ENCODE measurements at regions of chr5 and their contacts with region 1.

Region 1: GRCh38 chr5:31833005-31833404 is 194.1 kb downstream of the PDZD2 start:
- DNase-seq: no peak
- H3K4me3 ChIP-seq: no peak overlapping the region
- H3K4me3 Mint-ChIP-seq: no peak overlapping the region
- H3K27ac ChIP-seq: no peak overlapping the region
- H3K27ac Mint-ChIP-seq: no peak overlapping the region
- H3K4me1 ChIP-seq: no peaks in the 10 kb centered on the region
- H3K4me1 Mint-ChIP-seq: no peaks in the 10 kb centered on the region
- H3K27me3 ChIP-seq: no peaks in the 10 kb centered on the region
- H3K27me3 Mint-ChIP-seq: peaks cover 0 to 6% of the 10 kb centered on the region in 2 donors

Region 2: DNA sequence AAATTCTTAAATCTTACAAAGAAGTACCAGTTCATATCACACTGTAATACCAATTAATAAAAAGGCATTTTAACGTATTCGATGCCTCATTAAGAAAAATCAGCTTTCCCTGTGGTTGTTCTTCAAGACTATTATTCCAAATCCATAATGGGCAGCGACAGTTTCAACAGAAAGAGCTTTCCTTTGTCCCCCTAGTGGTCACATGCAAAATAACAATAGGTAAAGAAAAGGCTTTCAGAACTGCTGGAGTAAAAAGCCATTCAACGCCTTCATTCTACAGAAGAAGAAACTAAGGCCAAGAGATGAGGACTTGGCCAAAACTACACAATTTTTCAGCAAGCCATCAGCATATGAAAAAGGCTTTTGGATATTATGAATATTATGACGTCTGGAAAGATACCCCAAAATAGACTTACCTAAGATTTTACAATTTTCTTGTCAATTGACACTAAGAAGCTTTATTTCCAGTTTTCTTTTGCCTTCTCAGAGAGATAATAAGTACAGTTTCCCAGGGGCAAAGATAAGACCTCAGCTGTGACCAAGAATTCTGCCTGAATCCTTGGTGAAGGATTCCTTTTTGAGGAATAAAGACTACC is 646.2 kb before region 1 on chr5:
- CTCF ChIA-PET with region 1: no interaction called
- POLR2A ChIA-PET with region 1: no interaction called
- intact Hi-C with region 1: no loop called
- DNase-seq: no peak
- H3K4me3 ChIP-seq: no peak overlapping the region
- H3K4me3 Mint-ChIP-seq: no peak overlapping the region
- H3K27ac ChIP-seq: no peak overlapping the region
- H3K27ac Mint-ChIP-seq: no peak overlapping the region
- H3K4me1 ChIP-seq: no peaks in the 10 kb centered on the region
- H3K4me1 Mint-ChIP-seq: no peaks in the 10 kb centered on the region
- H3K27me3 ChIP-seq: no peaks in the 10 kb centered on the region
- H3K27me3 Mint-ChIP-seq: peaks cover 0 to 4% of the 10 kb centered on the region in 2 donors

Region 3: GRCh38 chr5:31355337-31355736 is 477.7 kb before region 1 on chr5:
- CTCF ChIA-PET with region 1: no interaction called
- POLR2A ChIA-PET with region 1: no interaction called
- intact Hi-C with region 1: loop called (anchors 10 kb)
- DNase-seq: no peak
- H3K4me3 ChIP-seq: no peak overlapping the region
- H3K4me3 Mint-ChIP-seq: no peak overlapping the region
- H3K27ac ChIP-seq: no peak overlapping the region
- H3K27ac Mint-ChIP-seq: no peak overlapping the region
- H3K4me1 ChIP-seq: no peaks in the 10 kb centered on the region
- H3K4me1 Mint-ChIP-seq: no peaks in the 10 kb centered on the region
- H3K27me3 ChIP-seq: no peaks in the 10 kb centered on the region
- H3K27me3 Mint-ChIP-seq: peaks cover 4 to 6% of the 10 kb centered on the region in 2 donors